Cardiac septum (tissue), 1 donor: ENCODE measurements at regions of chr6 and their contacts with region 1.

Region 1: DNA sequence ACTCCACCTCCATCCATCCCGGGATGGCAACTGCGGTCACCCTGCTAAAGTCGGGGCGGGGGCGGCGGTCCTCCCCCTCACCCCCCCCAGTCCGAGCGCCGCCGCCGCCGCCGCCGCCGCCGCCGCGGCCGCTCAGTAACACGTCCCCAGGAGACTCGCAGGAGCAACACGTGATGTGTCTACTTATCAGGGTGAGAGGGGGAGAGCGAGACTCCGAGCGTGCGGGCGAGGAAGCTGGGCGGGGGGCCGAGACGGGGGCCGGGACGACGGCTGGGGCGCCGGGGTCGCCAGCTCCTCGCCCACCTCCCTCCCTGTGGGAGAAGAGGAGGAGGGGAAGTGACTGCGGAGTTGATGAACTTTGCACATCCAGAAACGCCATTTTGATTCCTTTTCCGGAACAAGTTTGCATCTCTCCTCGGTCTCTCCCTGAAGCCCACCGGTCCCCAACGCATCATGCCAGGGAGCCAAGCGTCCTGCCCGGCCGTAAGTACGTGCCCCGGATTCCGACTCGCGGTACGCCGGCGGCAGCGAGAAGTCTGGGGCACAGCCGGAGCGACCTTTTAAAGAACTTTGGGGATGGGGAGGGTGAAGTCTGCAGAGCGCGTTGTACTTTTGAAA is at the start of gene RREB1:
- DNase-seq: peak; percentile 91
- total RNA-seq, gene RREB1: 27.8 TPM

Region 2: DNA sequence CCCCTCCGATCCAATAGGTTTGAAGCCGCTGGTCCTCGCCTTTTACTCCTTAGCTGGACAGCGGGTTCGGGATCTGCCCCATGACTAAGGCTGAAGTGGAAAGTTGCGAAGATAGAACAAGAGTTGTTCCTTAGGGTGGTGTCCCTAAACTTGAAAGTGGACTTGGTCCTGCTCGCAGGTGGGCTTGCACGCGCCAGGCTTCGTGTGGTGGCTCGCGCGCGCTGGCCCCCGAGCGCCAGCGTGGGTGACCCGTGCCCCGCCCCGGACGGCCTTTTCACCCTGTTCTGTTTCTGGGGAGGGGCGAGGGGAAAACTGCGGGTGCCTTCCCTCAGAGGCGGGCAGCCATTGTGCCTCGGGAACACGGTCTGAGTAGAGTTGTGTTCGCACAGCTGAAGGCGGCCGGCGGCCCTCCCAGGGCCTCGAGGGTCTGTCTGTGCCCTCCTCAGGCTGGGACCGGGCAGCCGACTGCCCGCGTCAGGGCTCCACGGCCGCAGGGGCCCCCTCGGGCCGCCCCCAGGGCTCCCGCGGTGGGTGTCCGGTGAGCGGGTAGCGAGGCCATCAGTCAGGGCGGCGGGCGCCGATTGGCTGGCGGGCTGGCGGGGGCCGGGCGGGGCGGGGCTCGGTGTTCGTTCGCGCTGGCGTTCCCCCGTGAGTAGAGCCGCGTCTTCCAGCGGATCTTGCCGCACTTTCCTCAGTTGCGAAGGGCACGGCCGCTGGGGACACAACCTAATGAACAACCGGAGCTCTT is 33.1 kb after region 1 on chr6:
- intact Hi-C with region 1: loop called (anchors 2 kb)
- DNase-seq: peak; percentile 97

Region 3: GRCh38 chr6:7219310-7219709 is 111.6 kb after region 1 on chr6:
- intact Hi-C with region 1: loop called (anchors 5 kb)
- DNase-seq: no peak